CD4-positive, alpha-beta memory T cell (primary cell): ENCODE measurements at regions of chr7 and their contacts with region 1.

Region 1: DNA sequence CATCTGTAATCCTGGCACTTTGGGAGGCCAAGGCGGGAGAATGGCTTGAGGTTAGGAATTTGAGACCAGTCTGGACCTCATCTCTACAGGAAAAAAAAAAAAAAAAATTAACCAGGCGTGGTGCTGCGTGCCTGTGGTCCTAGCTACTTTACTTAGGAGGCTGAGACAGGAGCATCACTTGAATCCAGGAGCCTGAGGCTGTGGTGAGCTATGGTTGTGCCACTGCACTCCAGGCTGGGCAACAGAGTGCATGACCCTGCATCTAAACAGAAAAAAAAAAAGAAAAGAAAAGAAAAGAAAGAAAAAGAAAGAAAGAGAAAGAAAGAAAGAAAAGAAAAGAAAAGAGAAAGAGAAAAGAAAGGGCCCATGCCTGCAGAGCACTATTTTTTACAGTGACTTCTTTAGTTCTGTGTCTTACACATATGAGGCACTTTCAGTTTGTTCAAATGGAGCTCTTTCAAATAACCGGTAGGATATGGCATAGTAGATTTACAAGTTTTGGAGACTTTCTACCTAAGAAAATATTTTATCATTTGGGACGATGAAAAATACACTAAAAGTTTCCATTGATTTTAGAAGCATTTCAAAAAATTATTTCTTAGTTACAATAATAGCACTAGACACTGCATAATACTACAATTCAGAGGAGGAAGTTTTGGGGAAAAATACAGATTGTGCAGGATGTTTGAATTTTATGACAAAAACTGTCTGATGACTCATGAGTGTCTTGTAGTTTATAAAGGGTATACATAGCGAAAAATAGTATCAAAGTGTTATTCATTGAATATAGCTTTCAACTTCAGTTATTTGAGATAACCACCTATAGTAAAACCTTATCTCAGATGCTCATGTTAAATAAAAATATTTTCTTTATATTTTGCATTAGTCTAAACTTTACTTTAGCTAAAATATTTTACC is 75.9 kb downstream of the MDFIC start:
- DNase-seq: no peak
- H3K4me3 ChIP-seq: no peak overlapping the region
- H3K4me3 Mint-ChIP-seq: peak overlapping the region in 7 of 8 donors; percentile 48 to 83 (median 72)
- H3K27ac ChIP-seq: no peak overlapping the region
- H3K27ac Mint-ChIP-seq: peak overlapping the region; percentile 57 to 86 (median 71)
- H3K4me1 ChIP-seq: peaks cover 62% of the 10 kb centered on the region
- H3K4me1 Mint-ChIP-seq: peaks cover 61 to 86% (median 72%) of the 10 kb centered on the region in 4 donors
- H3K27me3 ChIP-seq: no peaks in the 10 kb centered on the region
- H3K27me3 Mint-ChIP-seq: no peaks in the 10 kb centered on the region

Region 2: DNA sequence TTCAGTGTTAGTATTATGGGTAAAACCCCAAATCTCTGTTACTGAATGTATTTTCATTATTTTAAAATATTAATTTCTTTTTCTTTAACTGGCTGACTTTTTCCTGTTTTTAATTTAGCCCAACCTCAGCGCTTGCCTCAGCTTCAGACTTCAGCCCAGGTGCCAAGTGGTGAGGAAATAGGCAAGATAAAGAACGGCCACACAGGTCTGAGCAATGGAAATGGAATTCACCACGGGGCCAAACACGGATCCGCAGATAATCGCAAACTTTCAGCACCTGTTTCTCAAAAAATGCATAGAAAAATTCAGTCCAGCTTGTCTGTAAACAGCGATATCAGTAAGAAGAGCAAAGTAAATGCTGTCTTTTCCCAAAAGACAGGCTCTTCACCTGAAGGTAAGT is 18.4 kb before region 1 on chr7:
- CTCF ChIA-PET with region 1: no interaction called
- POLR2A ChIA-PET with region 1: no interaction called
- intact Hi-C with region 1: loop called (anchors 2 kb)
- DNase-seq: no peak
- H3K4me3 ChIP-seq: no peak overlapping the region
- H3K4me3 Mint-ChIP-seq: peak overlapping the region in 5 of 8 donors; percentile 30 to 56 (median 47)
- H3K27ac ChIP-seq: no peak overlapping the region
- H3K27ac Mint-ChIP-seq: peak overlapping the region in 4 of 7 donors; percentile 23 to 73 (median 32)
- H3K4me1 ChIP-seq: peaks cover 68% of the 10 kb centered on the region
- H3K4me1 Mint-ChIP-seq: peaks cover 53 to 84% (median 62%) of the 10 kb centered on the region in 4 donors
- H3K27me3 ChIP-seq: no peaks in the 10 kb centered on the region
- H3K27me3 Mint-ChIP-seq: no peaks in the 10 kb centered on the region

Region 3: GRCh38 chr7:115015619-115016018 is 17.9 kb after region 1 on chr7:
- CTCF ChIA-PET with region 1: no interaction called
- POLR2A ChIA-PET with region 1: no interaction called
- intact Hi-C with region 1: loop called (anchors 2 kb)
- DNase-seq: no peak
- H3K4me3 ChIP-seq: no peak overlapping the region
- H3K4me3 Mint-ChIP-seq: peak overlapping the region in 3 of 8 donors; percentile 20 to 69 (median 54)
- H3K27ac ChIP-seq: no peak overlapping the region
- H3K27ac Mint-ChIP-seq: peak overlapping the region in 6 of 7 donors; percentile 29 to 67 (median 52)
- H3K4me1 ChIP-seq: peaks cover 66% of the 10 kb centered on the region
- H3K4me1 Mint-ChIP-seq: peaks cover 45 to 71% (median 58%) of the 10 kb centered on the region in 4 donors
- H3K27me3 ChIP-seq: no peaks in the 10 kb centered on the region
- H3K27me3 Mint-ChIP-seq: no peaks in the 10 kb centered on the region